ENCODE measurements at regions of chr19 and their contacts with region 1.

Region 1: GRCh38 chr19:12789904-12790619 is 1.2 kb upstream of the JUNB start:
- DNase-seq: peak; percentile 95
- ATAC-seq: peak; percentile 43
- H3K4me3 Mint-ChIP-seq: peak overlapping the region; percentile 96
- H3K27ac Mint-ChIP-seq: peak overlapping the region; percentile 97
- H3K4me1 Mint-ChIP-seq: peaks cover 52% of the 10 kb centered on the region
- H3K27me3 Mint-ChIP-seq: no peaks in the 10 kb centered on the region
- CTCF ChIP-seq: no peak

Region 2: GRCh38 chr19:12647490-12648071 is 142.5 kb before region 1 on chr19:
- CTCF ChIA-PET with region 1: no interaction called
- POLR2A ChIA-PET with region 1: no interaction called
- intact Hi-C with region 1: no loop called
- DNase-seq: no peak
- ATAC-seq: peak; percentile 83
- H3K4me3 Mint-ChIP-seq: no peak overlapping the region
- H3K27ac Mint-ChIP-seq: no peak overlapping the region
- H3K4me1 Mint-ChIP-seq: peaks cover 8% of the 10 kb centered on the region
- H3K27me3 Mint-ChIP-seq: no peaks in the 10 kb centered on the region
- CTCF ChIP-seq: no peak

Region 3: DNA sequence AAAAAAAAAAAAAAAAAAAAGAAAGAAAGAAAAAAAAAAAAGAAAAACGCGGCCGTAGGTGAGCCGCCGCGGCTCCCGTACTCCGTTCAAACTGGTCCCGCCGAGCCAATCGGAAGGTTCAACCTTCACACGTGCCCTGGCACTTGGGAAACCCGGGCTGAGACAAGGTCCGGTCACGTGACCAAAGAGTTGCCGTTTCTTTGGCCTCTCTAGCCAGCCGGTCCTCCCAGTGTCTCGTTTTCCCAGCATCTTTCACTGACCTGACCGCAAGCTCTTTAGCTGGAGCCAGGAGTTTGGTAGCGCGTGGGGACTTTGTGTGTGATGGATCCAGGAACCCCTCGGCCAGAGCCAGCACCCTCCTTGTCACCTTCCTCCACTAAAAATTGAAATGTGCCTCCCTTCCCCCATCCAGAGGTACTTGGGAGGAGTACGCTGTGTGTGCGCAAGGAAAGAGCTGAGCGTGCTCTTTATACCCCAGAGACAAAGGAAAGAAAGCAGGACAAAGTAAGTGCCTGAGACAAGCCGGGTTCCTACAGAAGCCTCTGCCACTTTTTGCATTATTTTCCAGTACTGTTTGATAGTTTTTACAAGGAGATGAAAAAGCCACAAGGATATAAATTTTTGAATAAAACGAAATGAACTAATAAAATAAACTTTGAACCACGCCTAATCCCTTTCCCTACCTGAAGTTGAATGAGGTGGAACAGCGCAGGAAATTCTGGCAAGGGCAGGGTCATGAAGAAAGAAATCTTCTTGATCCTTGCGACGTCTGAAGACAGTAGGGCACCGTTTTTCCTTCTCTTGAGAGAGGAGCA is 67.3 kb before region 1 on chr19:
- CTCF ChIA-PET with region 1: interaction called, 3 read pairs
- POLR2A ChIA-PET with region 1: interaction called, 16 read pairs
- intact Hi-C with region 1: no loop called
- DNase-seq: peak; percentile 75
- ATAC-seq: peak; percentile 84
- H3K4me3 Mint-ChIP-seq: peak overlapping the region; percentile 92
- H3K27ac Mint-ChIP-seq: peak overlapping the region; percentile 90
- H3K4me1 Mint-ChIP-seq: peaks cover 43% of the 10 kb centered on the region
- H3K27me3 Mint-ChIP-seq: no peaks in the 10 kb centered on the region
- CTCF ChIP-seq: no peak

Region 4: GRCh38 chr19:12757544-12758274 is 32.4 kb before region 1 on chr19:
- CTCF ChIA-PET with region 1: interaction called, 280 read pairs
- POLR2A ChIA-PET with region 1: interaction called, 5 read pairs
- intact Hi-C with region 1: no loop called
- DNase-seq: peak; percentile 69
- ATAC-seq: peak; percentile 75
- H3K4me3 Mint-ChIP-seq: no peak overlapping the region
- H3K27ac Mint-ChIP-seq: no peak overlapping the region
- H3K4me1 Mint-ChIP-seq: peaks cover 10% of the 10 kb centered on the region
- H3K27me3 Mint-ChIP-seq: peaks cover 22% of the 10 kb centered on the region
- CTCF ChIP-seq: peak; percentile 70

Region 5: GRCh38 chr19:12777217-12778016 is 12.6 kb before region 1 on chr19:
- CTCF ChIA-PET with region 1: interaction called, 278 read pairs
- POLR2A ChIA-PET with region 1: interaction called, 909 read pairs
- intact Hi-C with region 1: loop called (anchors 1 kb)
- DNase-seq: peak; percentile 85
- ATAC-seq: peak; percentile 37
- H3K4me3 Mint-ChIP-seq: peak overlapping the region; percentile 83
- H3K27ac Mint-ChIP-seq: peak overlapping the region; percentile 87
- H3K4me1 Mint-ChIP-seq: peaks cover 48% of the 10 kb centered on the region
- H3K27me3 Mint-ChIP-seq: no peaks in the 10 kb centered on the region
- CTCF ChIP-seq: peak; percentile 73

Region 6: GRCh38 chr19:12815088-12815487 is 25.0 kb after region 1 on chr19:
- CTCF ChIA-PET with region 1: no interaction called
- POLR2A ChIA-PET with region 1: no interaction called
- intact Hi-C with region 1: no loop called
- DNase-seq: no peak
- ATAC-seq: no peak
- H3K4me3 Mint-ChIP-seq: no peak overlapping the region
- H3K27ac Mint-ChIP-seq: no peak overlapping the region
- H3K4me1 Mint-ChIP-seq: no peaks in the 10 kb centered on the region
- H3K27me3 Mint-ChIP-seq: no peaks in the 10 kb centered on the region
- CTCF ChIP-seq: no peak

Region 7: GRCh38 chr19:12907166-12907565 is 117.1 kb after region 1 on chr19:
- CTCF ChIA-PET with region 1: no interaction called
- POLR2A ChIA-PET with region 1: no interaction called
- intact Hi-C with region 1: no loop called
- DNase-seq: no peak
- ATAC-seq: no peak
- H3K4me3 Mint-ChIP-seq: no peak overlapping the region
- H3K27ac Mint-ChIP-seq: no peak overlapping the region
- H3K4me1 Mint-ChIP-seq: no peaks in the 10 kb centered on the region
- H3K27me3 Mint-ChIP-seq: no peaks in the 10 kb centered on the region
- CTCF ChIP-seq: no peak

Region 8: DNA sequence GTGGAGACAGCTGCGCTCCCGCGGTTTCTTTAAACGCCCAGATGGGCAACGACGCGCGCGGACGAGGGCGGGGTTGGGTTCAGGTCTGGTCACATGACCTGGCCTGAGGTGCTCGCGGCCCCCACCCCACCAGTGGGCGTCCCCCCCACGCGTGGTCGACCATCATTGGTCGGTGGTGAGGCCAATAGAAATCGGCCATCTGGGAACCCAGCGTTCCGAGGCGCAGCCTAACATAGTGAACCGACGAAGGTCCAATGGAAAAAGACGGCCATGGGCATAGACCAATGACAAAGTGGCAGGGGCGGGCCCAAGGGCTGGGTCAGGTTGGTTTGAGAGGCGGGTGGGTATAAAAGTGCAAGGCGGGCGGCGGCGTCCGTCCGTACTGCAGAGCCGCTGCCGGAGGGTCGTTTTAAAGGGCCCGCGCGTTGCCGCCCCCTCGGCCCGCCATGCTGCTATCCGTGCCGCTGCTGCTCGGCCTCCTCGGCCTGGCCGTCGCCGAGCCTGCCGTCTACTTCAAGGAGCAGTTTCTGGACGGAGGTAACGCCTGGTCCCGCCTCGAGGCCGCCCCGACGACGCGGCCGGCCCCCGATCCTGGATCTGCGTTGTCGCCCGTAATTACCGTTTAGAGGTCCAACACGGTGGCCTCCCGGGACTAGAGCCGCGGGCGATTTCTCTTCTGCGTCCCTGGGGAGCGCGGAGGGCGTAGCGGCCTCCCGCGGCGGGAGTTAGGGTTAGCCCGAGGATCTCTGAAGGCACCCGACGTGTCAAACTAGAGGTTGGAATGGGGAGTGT is 148.4 kb after region 1 on chr19 and contains the start of gene CALR:
- CTCF ChIA-PET with region 1: no interaction called
- POLR2A ChIA-PET with region 1: interaction called, 7 read pairs
- intact Hi-C with region 1: loop called (anchors 1 kb)
- DNase-seq: peak; percentile 96
- ATAC-seq: peak; percentile 85
- H3K4me3 Mint-ChIP-seq: peak within 1 kb of the TSS; percentile 99
- H3K27ac Mint-ChIP-seq: peak within 1 kb of the TSS; percentile 95
- H3K4me1 Mint-ChIP-seq: peaks cover 62% of the 10 kb centered on the region
- H3K27me3 Mint-ChIP-seq: no peaks in the 10 kb centered on the region
- CTCF ChIP-seq: no peak
- total RNA-seq, gene CALR: 721 and 802 TPM in 2 replicates

Measured in activated B cell treated with CpG ODN at 0.5 μM for 24 hours (primary cell).